Prostate gland (tissue), 2 donors: ENCODE measurements at regions of chr2 and their contacts with region 1.

Region 1: DNA sequence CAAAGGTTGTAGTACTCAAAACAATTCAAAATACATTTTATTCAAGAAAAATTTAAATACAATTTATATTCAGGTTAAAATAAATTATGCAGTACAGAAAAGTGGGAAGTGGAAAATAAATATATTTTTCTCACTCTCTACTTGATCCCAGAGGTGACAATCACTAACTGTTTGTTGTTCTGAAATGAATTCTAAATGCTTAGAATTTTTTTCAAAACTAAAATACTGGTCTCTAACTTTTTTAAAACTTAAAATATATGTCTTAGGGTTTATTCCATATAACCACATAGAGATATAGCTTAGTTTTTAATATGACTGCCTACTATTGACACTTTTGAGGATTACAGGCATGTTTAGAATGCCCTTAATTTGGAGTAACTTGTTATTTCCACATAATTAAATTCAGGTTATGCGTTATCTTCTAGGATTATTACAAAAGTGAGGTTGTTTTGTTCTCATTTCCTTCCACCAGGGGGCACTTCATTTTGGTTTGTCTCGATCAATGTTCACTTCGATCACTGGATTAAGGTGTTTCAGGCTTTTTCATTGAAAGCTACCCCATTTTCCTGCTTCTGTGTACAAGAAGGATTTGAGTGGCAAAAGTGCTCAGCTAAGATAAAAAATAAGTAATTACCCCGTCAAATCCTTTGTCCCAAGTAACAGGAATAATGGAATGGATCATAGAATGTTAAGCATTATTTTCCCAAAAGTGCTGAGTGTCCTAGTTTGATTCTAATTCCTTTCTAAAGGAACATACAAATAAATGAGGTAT is 27.1 kb upstream of the TFPI start:
- DNase-seq: no peak
- H3K4me3 ChIP-seq: no peak overlapping the region
- H3K27ac ChIP-seq: no peak overlapping the region
- H3K4me1 ChIP-seq: no peaks in the 10 kb centered on the region
- H3K27me3 ChIP-seq: no peaks in the 10 kb centered on the region
- CTCF ChIP-seq: peak; percentile 30 to 77 (median 68)
- POLR2A ChIP-seq: no peak

Region 2: GRCh38 chr2:187842978-187843847 is 261.9 kb after region 1 on chr2:
- intact Hi-C with region 1: loop called (anchors 10 kb)
- DNase-seq: no peak
- H3K4me3 ChIP-seq: no peak overlapping the region
- H3K27ac ChIP-seq: no peak overlapping the region
- H3K4me1 ChIP-seq: no peaks in the 10 kb centered on the region
- H3K27me3 ChIP-seq: no peaks in the 10 kb centered on the region
- CTCF ChIP-seq: peak; percentile 17 to 58 (median 48)
- POLR2A ChIP-seq: no peak

Region 3: GRCh38 chr2:188506843-188507242 is 925.5 kb after region 1 on chr2:
- intact Hi-C with region 1: loop called (anchors 5 kb)
- DNase-seq: no peak
- H3K4me3 ChIP-seq: no peak overlapping the region
- H3K27ac ChIP-seq: no peak overlapping the region
- H3K4me1 ChIP-seq: no peaks in the 10 kb centered on the region
- H3K27me3 ChIP-seq: no peaks in the 10 kb centered on the region
- CTCF ChIP-seq: no peak
- POLR2A ChIP-seq: no peak

Region 4: GRCh38 chr2:188569431-188570165 is 988.3 kb after region 1 on chr2:
- intact Hi-C with region 1: no loop called
- DNase-seq: no peak
- H3K4me3 ChIP-seq: no peak overlapping the region
- H3K27ac ChIP-seq: peak overlapping the region in 1 of 2 donors; percentile 49
- H3K4me1 ChIP-seq: peaks cover 7% of the 10 kb centered on the region
- H3K27me3 ChIP-seq: no peaks in the 10 kb centered on the region
- CTCF ChIP-seq: no peak
- POLR2A ChIP-seq: no peak